ENCODE measurements at regions of chr1 and their contacts with region 1.

Region 1: GRCh38 chr1:160607011-160607671 is 27.8 kb upstream of the CD84 start:
- DNase-seq: no peak
- ATAC-seq: peak; percentile 83 to 93
- H3K4me3 ChIP-seq: no peak overlapping the region
- H3K27ac ChIP-seq: no peak overlapping the region
- H3K4me1 ChIP-seq: no peaks in the 10 kb centered on the region
- H3K27me3 ChIP-seq: no peaks in the 10 kb centered on the region

Region 2: DNA sequence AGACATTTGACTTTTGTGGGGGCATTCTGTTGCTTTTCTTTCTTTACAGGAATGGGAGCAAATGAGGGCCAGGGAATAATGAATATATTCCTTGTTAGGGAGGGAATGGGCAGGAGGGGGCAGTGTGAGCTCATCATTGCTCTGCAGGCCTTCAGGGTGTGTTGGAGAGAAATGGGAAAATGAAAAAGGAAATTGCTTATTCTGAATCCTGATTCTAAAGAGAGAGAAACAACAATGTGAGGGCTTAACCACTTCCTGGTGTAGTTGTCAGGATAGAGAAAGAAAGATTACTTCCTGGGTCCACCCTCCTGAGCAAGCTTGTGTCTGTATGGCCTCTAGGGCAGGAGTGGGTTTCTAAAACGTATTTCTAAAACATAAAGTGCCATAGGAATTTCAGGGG is 178.5 kb before region 1 on chr1:
- intact Hi-C with region 1: loop called (anchors 2 to 5 kb)
- DNase-seq: peak; percentile 44 to 83 (median 71)
- ATAC-seq: peak; percentile 78 to 83
- H3K4me3 ChIP-seq: no peak overlapping the region
- H3K27ac ChIP-seq: no peak overlapping the region
- H3K4me1 ChIP-seq: peaks cover 2% of the 10 kb centered on the region
- H3K27me3 ChIP-seq: no peaks in the 10 kb centered on the region

Region 3: DNA sequence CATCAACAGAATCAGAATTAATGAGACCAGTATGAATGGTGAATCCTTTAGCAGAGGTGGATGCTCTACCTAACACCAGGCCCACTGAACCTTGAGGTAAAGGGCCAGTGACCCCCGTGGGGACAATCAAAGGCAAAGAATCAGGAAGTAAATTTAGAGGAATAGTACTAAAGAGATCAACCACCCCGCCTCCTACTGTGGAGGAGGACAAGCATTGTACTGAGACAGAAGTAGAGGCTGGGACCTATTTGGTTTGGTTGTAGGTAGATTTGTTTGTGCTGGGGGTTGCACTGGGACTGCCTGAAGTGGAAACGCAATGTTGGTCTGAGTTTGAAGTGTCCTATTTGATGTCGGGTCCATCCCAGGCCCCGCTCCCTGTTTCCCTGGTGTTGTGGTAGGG is 95.0 kb after region 1 on chr1:
- intact Hi-C with region 1: no loop called
- DNase-seq: no peak
- ATAC-seq: no peak
- H3K4me3 ChIP-seq: no peak overlapping the region
- H3K27ac ChIP-seq: no peak overlapping the region
- H3K4me1 ChIP-seq: no peaks in the 10 kb centered on the region
- H3K27me3 ChIP-seq: no peaks in the 10 kb centered on the region